Activated CD4-positive, alpha-beta T cell treated with anti-CD3 and anti-CD28 coated beads for 36 hours (primary cell): ENCODE measurements at regions of chr5 and their contacts with region 1.

Region 1: GRCh38 chr5:65562731-65563701 is at the starts of genes CENPK and PPWD1:
- DNase-seq: peak; percentile 98
- ATAC-seq: peak; percentile 99
- H3K4me3 Mint-ChIP-seq: peak within 1 kb of the TSS; percentile 91
- H3K27ac Mint-ChIP-seq: peak within 1 kb of the TSS; percentile 98
- H3K4me1 Mint-ChIP-seq: peaks cover 47% of the 10 kb centered on the region
- H3K27me3 Mint-ChIP-seq: no peaks in the 10 kb centered on the region
- total RNA-seq, gene CENPK: 70.5 to 77.5 TPM
- total RNA-seq, gene PPWD1: 43.0 to 44.0 TPM

Region 2: DNA sequence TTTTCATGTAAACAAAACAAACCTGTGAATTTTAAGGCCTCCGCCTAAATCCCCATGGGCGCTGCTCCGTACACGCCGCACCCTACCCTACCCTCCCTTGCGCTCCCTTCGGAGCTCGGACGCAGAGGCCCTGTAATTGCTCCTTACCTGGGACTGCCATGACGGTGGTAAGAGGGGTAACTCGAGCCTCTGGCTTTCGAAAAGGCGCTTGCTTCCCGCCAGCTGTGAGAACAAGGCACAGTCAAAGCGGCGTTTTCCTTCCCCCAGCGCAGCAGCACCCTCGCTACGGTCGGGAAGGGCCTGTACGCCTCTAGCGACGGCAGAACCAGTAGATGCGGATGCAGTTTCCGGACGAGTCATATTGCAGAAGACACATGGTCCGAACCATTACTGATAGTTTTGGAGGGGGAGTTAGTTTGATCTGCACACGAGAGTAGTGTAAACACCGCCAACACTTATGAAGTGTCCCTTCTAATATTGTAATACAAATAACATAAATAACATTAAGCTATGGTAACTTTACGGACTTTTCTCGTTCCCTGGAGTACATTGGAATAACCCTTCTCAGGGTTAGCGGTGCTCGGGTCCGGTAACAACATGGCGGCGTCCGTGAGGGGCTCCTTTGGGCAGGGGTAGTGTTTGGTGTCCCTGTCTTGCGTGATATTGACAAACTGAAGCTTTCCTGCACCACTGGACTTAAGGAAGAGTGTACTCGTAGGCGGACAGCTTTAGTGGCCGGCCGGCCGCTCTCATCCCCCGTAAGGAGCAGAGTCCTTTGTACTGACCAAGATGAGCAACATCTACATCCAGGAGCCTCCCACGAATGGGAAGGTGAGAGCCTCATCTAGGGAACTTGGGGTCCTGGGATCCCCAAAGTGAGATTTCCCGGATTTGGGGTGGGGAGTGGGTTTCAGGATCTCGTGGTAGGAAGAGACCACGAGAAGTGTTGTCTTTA is 794.4 kb before region 1 on chr5 and contains the starts of genes CWC27 and SREK1IP1:
- CTCF ChIA-PET with region 1: interaction called, 3 read pairs
- POLR2A ChIA-PET with region 1: no interaction called
- intact Hi-C with region 1: loop called (anchors 1 to 5 kb)
- DNase-seq: peak; percentile 89
- ATAC-seq: peak; percentile 97
- H3K4me3 Mint-ChIP-seq: peak within 1 kb of the TSS; percentile 91
- H3K27ac Mint-ChIP-seq: peak within 1 kb of the TSS; percentile 95
- H3K4me1 Mint-ChIP-seq: peaks cover 45% of the 10 kb centered on the region
- H3K27me3 Mint-ChIP-seq: no peaks in the 10 kb centered on the region
- total RNA-seq, gene CWC27: 35.4 to 35.8 TPM
- total RNA-seq, gene SREK1IP1: 27.8 TPM

Region 3: GRCh38 chr5:65035211-65036206 is 527.5 kb before region 1 on chr5:
- CTCF ChIA-PET with region 1: no interaction called
- POLR2A ChIA-PET with region 1: no interaction called
- intact Hi-C with region 1: loop called in 1 of 2 experiments (anchors 5 kb)
- DNase-seq: peak; percentile 83
- ATAC-seq: peak; percentile 94
- H3K4me3 Mint-ChIP-seq: peak overlapping the region; percentile 66
- H3K27ac Mint-ChIP-seq: peak overlapping the region; percentile 80
- H3K4me1 Mint-ChIP-seq: peaks cover 19% of the 10 kb centered on the region
- H3K27me3 Mint-ChIP-seq: no peaks in the 10 kb centered on the region

Region 4: DNA sequence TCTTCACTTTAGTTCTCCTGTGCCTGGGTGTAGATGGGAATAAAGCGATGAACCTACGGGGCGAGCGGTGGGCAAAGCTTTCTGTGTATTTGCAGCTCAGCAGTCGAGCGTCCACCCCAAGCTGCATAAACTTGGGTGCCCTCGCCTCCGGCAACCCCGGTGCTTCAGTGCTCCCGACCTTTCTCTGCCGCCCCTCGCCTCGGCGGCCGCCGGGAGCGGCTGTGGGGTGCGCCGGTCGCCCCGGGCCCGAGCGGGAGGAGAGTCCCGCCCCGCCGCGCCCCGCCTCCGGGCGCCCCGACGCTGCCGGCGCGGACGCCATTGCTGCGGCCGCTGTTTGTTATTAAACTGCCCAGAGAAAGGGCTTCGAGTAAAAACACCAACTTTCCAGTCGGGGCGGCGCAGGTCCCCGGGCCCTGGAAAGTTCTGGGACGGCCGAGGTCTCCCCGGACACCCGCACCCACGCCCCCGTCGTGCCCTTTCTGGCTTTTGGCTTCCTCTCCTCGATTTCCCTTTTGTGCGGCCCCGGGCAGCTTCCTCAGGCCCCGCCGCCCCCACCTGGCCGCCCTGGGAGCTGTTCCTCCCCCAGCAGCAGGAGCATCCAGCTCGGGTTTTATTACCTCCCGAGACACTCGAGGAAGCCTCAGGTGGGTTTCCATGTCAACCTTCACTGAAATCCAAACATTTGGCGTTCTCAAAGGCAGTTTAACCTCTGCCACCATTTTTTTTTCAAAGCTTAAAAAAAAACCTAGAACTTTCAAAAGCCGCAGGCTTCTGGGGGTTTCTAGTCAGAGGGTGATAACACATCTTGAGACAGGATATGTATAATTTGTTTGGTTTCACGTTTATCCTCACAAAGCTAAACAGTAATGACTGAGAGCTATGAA is 459.9 kb before region 1 on chr5:
- CTCF ChIA-PET with region 1: no interaction called
- POLR2A ChIA-PET with region 1: no interaction called
- intact Hi-C with region 1: loop called in 1 of 2 experiments (anchors 1 kb)
- DNase-seq: peak; percentile 52
- ATAC-seq: peak; percentile 84
- H3K4me3 Mint-ChIP-seq: peak overlapping the region; percentile 66
- H3K27ac Mint-ChIP-seq: peak overlapping the region; percentile 72
- H3K4me1 Mint-ChIP-seq: peaks cover 30% of the 10 kb centered on the region
- H3K27me3 Mint-ChIP-seq: peaks cover 9% of the 10 kb centered on the region

Region 5: GRCh38 chr5:65624571-65625555 is 61.8 kb after region 1 on chr5 and contains the starts of genes SHLD3 and TRAPPC13:
- CTCF ChIA-PET with region 1: interaction called, 3 read pairs
- POLR2A ChIA-PET with region 1: interaction called, 3 read pairs
- intact Hi-C with region 1: loop called (anchors 1 kb)
- DNase-seq: peak; percentile 88
- ATAC-seq: peak; percentile 78
- H3K4me3 Mint-ChIP-seq: peak within 1 kb of the TSS; percentile 85
- H3K27ac Mint-ChIP-seq: peak within 1 kb of the TSS; percentile 96
- H3K4me1 Mint-ChIP-seq: peaks cover 44% of the 10 kb centered on the region
- H3K27me3 Mint-ChIP-seq: no peaks in the 10 kb centered on the region
- total RNA-seq, gene SHLD3: 3.5 to 4.0 TPM
- total RNA-seq, gene TRAPPC13: 11.2 to 20.7 TPM

Region 6: GRCh38 chr5:65721720-65722574 is 158.9 kb after region 1 on chr5 and contains the starts of genes NLN and SGTB:
- CTCF ChIA-PET with region 1: no interaction called
- POLR2A ChIA-PET with region 1: interaction called, 4 read pairs
- intact Hi-C with region 1: loop called in 1 of 2 experiments (anchors 1 kb)
- DNase-seq: peak; percentile 91
- ATAC-seq: peak; percentile 91
- H3K4me3 Mint-ChIP-seq: peak within 1 kb of the TSS; percentile 94
- H3K27ac Mint-ChIP-seq: peak within 1 kb of the TSS; percentile 93
- H3K4me1 Mint-ChIP-seq: peaks cover 20% of the 10 kb centered on the region
- H3K27me3 Mint-ChIP-seq: no peaks in the 10 kb centered on the region
- total RNA-seq, gene NLN: 30.9 to 33.8 TPM
- total RNA-seq, gene SGTB: 18.0 TPM